CD8-positive, alpha-beta T cell (primary cell): ENCODE measurements at regions of chr2 and their contacts with region 1.

Region 1: DNA sequence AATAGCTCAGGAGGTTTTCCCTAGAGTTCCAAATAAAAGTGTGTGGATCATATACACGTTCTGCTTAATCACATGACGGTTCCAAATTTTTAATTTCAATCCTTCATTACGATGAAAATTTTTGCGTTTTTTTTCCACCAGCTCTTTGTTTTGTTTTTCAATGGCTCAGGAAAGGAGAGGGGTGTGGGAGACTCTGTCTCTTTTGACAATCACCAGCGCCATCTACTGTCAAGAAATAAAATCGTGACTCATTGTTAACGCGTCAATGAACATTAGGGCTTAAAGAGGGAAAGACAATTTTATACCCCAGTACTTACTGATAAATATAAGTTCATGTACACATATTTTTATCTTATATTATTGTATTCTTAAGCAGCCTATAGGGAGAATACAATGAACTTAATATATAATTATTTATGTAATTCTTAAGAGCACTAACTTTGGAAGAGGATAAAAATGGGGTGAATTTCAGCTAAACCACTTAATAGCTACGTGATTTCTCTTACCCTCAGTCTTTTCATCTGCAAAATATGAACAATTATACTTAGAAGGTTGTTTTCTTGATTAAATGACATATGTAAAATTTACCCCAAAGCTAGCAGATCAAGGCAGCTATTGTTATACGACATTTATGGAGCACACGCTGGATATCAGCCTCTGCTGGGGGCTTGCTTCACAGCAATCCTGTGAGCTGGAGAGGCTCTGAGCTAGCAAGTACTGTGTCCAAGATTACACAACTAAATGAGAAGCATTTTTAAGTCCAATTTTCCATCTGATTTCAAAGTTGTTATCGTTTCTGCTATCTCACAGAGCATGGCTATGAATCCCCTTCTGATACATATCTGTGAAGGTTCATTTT is 47.4 kb upstream of the RMDN2 start:
- DNase-seq: peak in 3 of 9 experiments; percentile 39 to 76 (median 67)
- ATAC-seq: peak; percentile 63
- H3K4me3 ChIP-seq: no peak overlapping the region
- H3K4me3 Mint-ChIP-seq: no peak overlapping the region
- H3K27ac ChIP-seq: no peak overlapping the region
- H3K27ac Mint-ChIP-seq: no peak overlapping the region
- H3K4me1 ChIP-seq: no peaks in the 10 kb centered on the region
- H3K4me1 Mint-ChIP-seq: peaks cover 2% of the 10 kb centered on the region
- H3K27me3 ChIP-seq: no peaks in the 10 kb centered on the region
- H3K27me3 Mint-ChIP-seq: peaks cover 21% of the 10 kb centered on the region
- CTCF ChIP-seq: peak; percentile 82

Region 2: DNA sequence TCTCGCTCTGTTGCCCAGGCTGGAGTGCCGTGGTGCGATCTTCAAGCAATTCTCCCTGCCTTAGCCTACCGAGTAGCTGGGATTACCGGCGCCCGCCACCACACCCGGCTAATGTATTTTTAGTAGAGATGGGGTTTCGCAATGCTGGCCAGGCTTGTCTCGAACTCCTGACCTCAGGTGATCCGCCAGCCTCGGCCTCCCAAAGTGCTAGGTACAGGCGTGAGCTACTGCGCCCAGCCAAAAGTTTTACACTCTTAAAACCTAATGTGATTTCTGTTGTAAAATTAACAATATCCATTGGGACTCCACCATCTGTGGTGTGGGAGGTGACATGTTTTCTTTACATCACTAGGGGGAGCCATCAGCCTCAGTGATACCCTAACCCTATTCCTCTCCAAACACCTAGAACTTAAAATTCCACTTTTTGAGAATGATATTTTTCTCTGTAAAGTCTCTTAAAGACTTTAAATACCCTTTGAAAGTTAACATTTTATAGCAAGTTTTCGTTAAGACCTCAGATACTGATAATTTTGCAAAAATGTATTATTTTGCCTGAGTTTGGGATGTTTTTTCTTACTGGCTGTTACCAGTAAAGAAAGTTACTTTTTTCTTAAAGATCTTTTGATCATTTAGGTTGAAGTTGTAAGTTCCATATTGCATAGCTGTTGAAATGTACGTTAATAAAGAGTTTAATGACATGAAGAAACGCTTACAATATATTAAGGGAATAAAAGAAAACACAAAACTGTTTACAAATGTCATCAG is 709.3 kb before region 1 on chr2:
- CTCF ChIA-PET with region 1: interaction called, 9 read pairs
- POLR2A ChIA-PET with region 1: no interaction called
- intact Hi-C with region 1: loop called in 1 of 2 experiments (anchors 5 kb)
- DNase-seq: peak in 3 of 9 experiments; percentile 10 to 62 (median 51)
- ATAC-seq: peak; percentile 71
- H3K4me3 ChIP-seq: no peak overlapping the region
- H3K4me3 Mint-ChIP-seq: no peak overlapping the region
- H3K27ac ChIP-seq: no peak overlapping the region
- H3K27ac Mint-ChIP-seq: no peak overlapping the region
- H3K4me1 ChIP-seq: no peaks in the 10 kb centered on the region
- H3K4me1 Mint-ChIP-seq: no peaks in the 10 kb centered on the region
- H3K27me3 ChIP-seq: peaks cover 0 to 2% of the 10 kb centered on the region in 2 experiments
- H3K27me3 Mint-ChIP-seq: peaks cover 2% of the 10 kb centered on the region
- CTCF ChIP-seq: peak; percentile 79

Region 3: DNA sequence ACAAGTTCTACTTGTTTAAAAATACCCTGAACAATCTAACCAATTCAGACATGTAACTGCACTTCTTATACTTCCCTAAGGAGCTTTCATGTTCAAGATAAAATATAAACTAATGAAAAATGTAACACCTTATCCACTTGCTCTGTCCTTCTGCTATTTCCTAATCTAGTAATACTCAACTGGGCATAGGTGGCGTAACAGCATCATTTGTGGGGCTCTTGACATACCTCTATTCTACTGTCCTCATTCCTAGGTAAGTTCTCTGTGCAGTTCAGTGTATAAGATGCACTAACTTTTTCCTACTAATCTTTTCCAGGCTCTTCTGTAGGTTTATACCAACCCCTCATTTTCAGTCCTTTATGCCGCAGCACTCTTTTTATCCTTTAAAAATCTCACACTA is 589.7 kb before region 1 on chr2:
- CTCF ChIA-PET with region 1: no interaction called
- POLR2A ChIA-PET with region 1: no interaction called
- intact Hi-C with region 1: loop called in 1 of 2 experiments (anchors 10 kb)
- DNase-seq: peak in 2 of 9 experiments; percentile 28 to 34
- ATAC-seq: no peak
- H3K4me3 ChIP-seq: no peak overlapping the region
- H3K4me3 Mint-ChIP-seq: no peak overlapping the region
- H3K27ac ChIP-seq: no peak overlapping the region
- H3K27ac Mint-ChIP-seq: no peak overlapping the region
- H3K4me1 ChIP-seq: no peaks in the 10 kb centered on the region
- H3K4me1 Mint-ChIP-seq: no peaks in the 10 kb centered on the region
- H3K27me3 ChIP-seq: no peaks in the 10 kb centered on the region
- H3K27me3 Mint-ChIP-seq: no peaks in the 10 kb centered on the region
- CTCF ChIP-seq: no peak

Region 4: DNA sequence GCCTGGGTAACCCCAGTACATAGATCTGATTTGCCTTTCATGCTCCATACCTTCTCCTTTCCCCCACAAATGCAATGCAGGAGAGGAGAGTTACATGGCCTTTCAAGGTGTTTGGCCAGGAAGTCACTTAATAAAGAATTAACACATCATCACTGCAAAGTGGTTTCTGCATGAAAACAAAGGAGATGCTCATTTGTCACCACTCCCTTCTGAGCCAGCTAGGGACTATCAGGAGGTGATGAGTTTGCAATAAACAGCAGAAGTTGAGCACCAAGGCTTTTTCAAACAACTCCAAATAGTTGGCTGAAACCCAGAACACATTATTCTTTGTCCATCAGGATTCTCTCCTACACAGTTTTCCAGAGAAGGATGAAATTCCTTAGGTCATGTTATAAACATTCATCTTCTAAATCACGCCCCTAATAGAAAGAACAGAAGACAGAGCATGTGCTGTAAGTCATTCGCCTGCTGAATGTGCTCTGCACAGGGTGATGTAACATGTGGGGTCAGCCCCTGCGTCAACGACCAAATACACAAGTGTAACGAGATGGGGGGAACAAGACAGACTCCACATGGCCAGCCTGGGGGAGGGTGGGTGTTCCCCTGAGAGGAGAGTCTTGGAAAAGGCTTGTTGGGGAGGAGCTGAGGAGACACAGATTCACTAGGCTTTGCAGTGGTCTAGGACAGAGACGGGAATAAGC is 39.9 kb before region 1 on chr2:
- CTCF ChIA-PET with region 1: interaction called, 38 read pairs
- POLR2A ChIA-PET with region 1: no interaction called
- intact Hi-C with region 1: loop called in 1 of 2 experiments (anchors 2 kb)
- DNase-seq: no peak
- ATAC-seq: no peak
- H3K4me3 ChIP-seq: no peak overlapping the region
- H3K4me3 Mint-ChIP-seq: no peak overlapping the region
- H3K27ac ChIP-seq: no peak overlapping the region
- H3K27ac Mint-ChIP-seq: no peak overlapping the region
- H3K4me1 ChIP-seq: no peaks in the 10 kb centered on the region
- H3K4me1 Mint-ChIP-seq: no peaks in the 10 kb centered on the region
- H3K27me3 ChIP-seq: peaks cover 0 to 3% of the 10 kb centered on the region in 2 experiments
- H3K27me3 Mint-ChIP-seq: peaks cover 4% of the 10 kb centered on the region
- CTCF ChIP-seq: no peak

Region 5: DNA sequence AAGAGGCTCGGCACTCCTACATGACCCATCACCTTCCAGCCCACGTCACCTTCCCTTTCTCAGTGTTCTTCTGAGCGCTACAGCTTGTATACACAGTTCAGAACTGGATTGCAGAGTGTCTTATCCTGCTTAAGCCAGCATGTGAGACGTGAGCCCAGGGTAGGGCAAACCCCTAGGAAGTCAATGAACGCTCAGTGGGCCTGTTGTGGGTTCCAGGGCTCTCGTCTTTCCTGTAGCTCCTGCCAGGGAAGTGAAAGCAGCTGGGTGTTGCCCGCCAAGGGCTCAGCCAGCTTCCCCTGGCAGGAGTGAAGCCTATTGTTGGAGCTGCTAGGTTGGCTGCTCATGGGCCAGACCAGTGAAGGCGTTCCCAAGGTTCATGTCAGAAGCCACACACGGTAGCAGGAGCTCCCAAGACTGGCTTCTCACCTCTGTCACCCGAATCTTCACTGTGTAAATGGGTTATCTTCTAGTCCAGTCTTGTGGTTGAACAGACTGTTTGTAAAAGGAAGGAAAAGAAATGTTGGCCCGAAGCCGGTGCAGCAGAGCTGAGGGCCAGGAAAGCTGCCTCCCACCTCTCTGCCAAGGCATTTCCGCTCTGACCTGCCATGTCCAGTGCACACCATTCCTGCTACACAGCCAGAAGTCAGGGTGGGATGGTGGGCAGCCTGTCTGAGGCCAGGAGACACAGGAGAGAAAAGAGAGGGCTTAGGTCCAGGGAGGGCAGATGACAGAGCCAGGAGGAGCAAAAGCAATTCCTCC is 22.2 kb before region 1 on chr2:
- CTCF ChIA-PET with region 1: interaction called, 14 read pairs
- POLR2A ChIA-PET with region 1: no interaction called
- intact Hi-C with region 1: no loop called
- DNase-seq: no peak
- ATAC-seq: no peak
- H3K4me3 ChIP-seq: no peak overlapping the region
- H3K4me3 Mint-ChIP-seq: no peak overlapping the region
- H3K27ac ChIP-seq: no peak overlapping the region
- H3K27ac Mint-ChIP-seq: no peak overlapping the region
- H3K4me1 ChIP-seq: peaks cover 13% of the 10 kb centered on the region
- H3K4me1 Mint-ChIP-seq: peaks cover 6% of the 10 kb centered on the region
- H3K27me3 ChIP-seq: no peaks in the 10 kb centered on the region
- H3K27me3 Mint-ChIP-seq: peaks cover 5% of the 10 kb centered on the region
- CTCF ChIP-seq: no peak

Region 6: GRCh38 chr2:37890893-37891495 is 13.3 kb after region 1 on chr2:
- CTCF ChIA-PET with region 1: interaction called, 96 read pairs
- POLR2A ChIA-PET with region 1: no interaction called
- intact Hi-C with region 1: no loop called
- DNase-seq: peak; percentile 27 to 75 (median 68)
- ATAC-seq: peak; percentile 57
- H3K4me3 ChIP-seq: no peak overlapping the region
- H3K4me3 Mint-ChIP-seq: no peak overlapping the region
- H3K27ac ChIP-seq: no peak overlapping the region
- H3K27ac Mint-ChIP-seq: no peak overlapping the region
- H3K4me1 ChIP-seq: peaks cover 36% of the 10 kb centered on the region
- H3K4me1 Mint-ChIP-seq: peaks cover 40% of the 10 kb centered on the region
- H3K27me3 ChIP-seq: peaks cover 0 to 2% of the 10 kb centered on the region in 2 experiments
- H3K27me3 Mint-ChIP-seq: peaks cover 2% of the 10 kb centered on the region
- CTCF ChIP-seq: peak; percentile 67